ENCODE measurements at regions of chr14 and their contacts with region 1.

Region 1: GRCh38 chr14:65287264-65288131 is 125.0 kb upstream of the FUT8 start:
- DNase-seq: peak; percentile 63
- H3K4me3 Mint-ChIP-seq: peak overlapping the region; percentile 82
- H3K27ac Mint-ChIP-seq: peak overlapping the region; percentile 97
- H3K4me1 Mint-ChIP-seq: peaks cover 82% of the 10 kb centered on the region
- H3K27me3 Mint-ChIP-seq: no peaks in the 10 kb centered on the region

Region 2: GRCh38 chr14:65003394-65003793 is 284.1 kb before region 1 on chr14:
- intact Hi-C with region 1: loop called (anchors 2 kb)
- DNase-seq: no peak
- H3K4me3 Mint-ChIP-seq: no peak overlapping the region
- H3K27ac Mint-ChIP-seq: peak overlapping the region; percentile 79
- H3K4me1 Mint-ChIP-seq: peaks cover 39% of the 10 kb centered on the region
- H3K27me3 Mint-ChIP-seq: no peaks in the 10 kb centered on the region

Region 3: GRCh38 chr14:65170768-65171507 is 116.6 kb before region 1 on chr14:
- intact Hi-C with region 1: loop called (anchors 1 kb)
- DNase-seq: peak; percentile 49
- H3K4me3 Mint-ChIP-seq: peak overlapping the region; percentile 73
- H3K27ac Mint-ChIP-seq: peak overlapping the region; percentile 88
- H3K4me1 Mint-ChIP-seq: peaks cover 48% of the 10 kb centered on the region
- H3K27me3 Mint-ChIP-seq: no peaks in the 10 kb centered on the region

Region 4: GRCh38 chr14:65302571-65303189 is 15.2 kb after region 1 on chr14:
- intact Hi-C with region 1: loop called (anchors 1 kb)
- DNase-seq: peak; percentile 56
- H3K4me3 Mint-ChIP-seq: peak overlapping the region; percentile 77
- H3K27ac Mint-ChIP-seq: peak overlapping the region; percentile 99
- H3K4me1 Mint-ChIP-seq: peaks cover 81% of the 10 kb centered on the region
- H3K27me3 Mint-ChIP-seq: no peaks in the 10 kb centered on the region

Region 5: DNA sequence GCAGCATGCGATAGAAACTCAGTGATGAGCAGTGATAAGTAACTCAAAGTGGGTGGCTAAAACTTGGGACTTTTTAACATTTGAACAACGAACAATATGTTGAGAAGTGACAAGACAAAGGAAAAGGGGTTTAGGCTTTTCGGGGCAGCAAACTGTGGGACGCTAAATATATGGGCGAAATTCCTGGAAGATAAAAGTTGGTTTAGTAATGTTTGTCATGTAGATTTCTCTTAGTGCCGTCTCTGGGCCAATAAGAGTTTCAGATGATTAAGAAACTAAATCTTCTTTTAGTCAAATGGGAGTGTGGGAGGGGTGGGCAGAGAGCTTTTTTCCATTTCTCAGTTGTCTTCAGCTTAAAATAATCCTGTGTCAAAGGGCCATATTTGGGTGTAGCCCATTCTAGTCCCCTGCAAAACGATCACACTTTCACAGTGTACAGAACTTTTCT is 83.3 kb after region 1 on chr14:
- intact Hi-C with region 1: loop called (anchors 1 kb)
- DNase-seq: no peak
- H3K4me3 Mint-ChIP-seq: peak overlapping the region; percentile 4
- H3K27ac Mint-ChIP-seq: peak overlapping the region; percentile 89
- H3K4me1 Mint-ChIP-seq: peaks cover 76% of the 10 kb centered on the region
- H3K27me3 Mint-ChIP-seq: no peaks in the 10 kb centered on the region

Region 6: GRCh38 chr14:65637780-65638179 is 350.3 kb after region 1 on chr14:
- intact Hi-C with region 1: loop called (anchors 2 kb)
- DNase-seq: peak; percentile 31
- H3K4me3 Mint-ChIP-seq: peak overlapping the region; percentile 34
- H3K27ac Mint-ChIP-seq: peak overlapping the region; percentile 79
- H3K4me1 Mint-ChIP-seq: peaks cover 49% of the 10 kb centered on the region
- H3K27me3 Mint-ChIP-seq: no peaks in the 10 kb centered on the region